H1 (cell line): ENCODE measurements at regions of chr14 and their contacts with region 1.

Region 1: GRCh38 chr14:23095196-23096108 is at the start of gene C14orf119:
- DNase-seq: peak in 1 of 2 experiments; percentile 96
- H3K4me3 ChIP-seq: peak within 1 kb of the TSS; percentile 92 to 97 (median 96)
- H3K27ac ChIP-seq: peak within 1 kb of the TSS; percentile 99
- H3K4me1 ChIP-seq: no peaks in the 10 kb centered on the region; a peak in 3 of 7 replicates
- H3K27me3 ChIP-seq: no peaks in the 10 kb centered on the region
- CTCF ChIP-seq: no peak
- EP300 ChIP-seq: no peak
- POLR2A ChIP-seq: no peak; a peak in 1 of 3 replicates
- RAD21 ChIP-seq: no peak
- total RNA-seq, gene C14orf119: 78.1 and 91.2 TPM in 2 replicates

Region 2: GRCh38 chr14:23113431-23114119 is 18.1 kb after region 1 on chr14:
- CTCF ChIA-PET with region 1: interaction called, 8 read pairs
- POLR2A ChIA-PET with region 1: interaction called, 13 read pairs
- DNase-seq: no peak
- H3K4me3 ChIP-seq: 0 out of 8 replicates have a peak overlapping the region, but pooled peaks of 1 of the 4 experiments have one; percentile 17
- H3K27ac ChIP-seq: no peak overlapping the region
- H3K4me1 ChIP-seq: peaks cover 0 to 14% (median 4%) of the 10 kb centered on the region in 4 experiments; a peak in 6 of 7 replicates
- H3K27me3 ChIP-seq: peaks cover 0 to 3% (median 0%) of the 10 kb centered on the region in 4 experiments; a peak in 2 of 7 replicates
- CTCF ChIP-seq: no peak
- EP300 ChIP-seq: no peak
- POLR2A ChIP-seq: no peak
- RAD21 ChIP-seq: no peak

Region 3: GRCh38 chr14:23344442-23344841 is 249.0 kb after region 1 on chr14:
- CTCF ChIA-PET with region 1: no interaction called
- POLR2A ChIA-PET with region 1: no interaction called
- DNase-seq: no peak
- H3K4me3 ChIP-seq: no peak overlapping the region
- H3K27ac ChIP-seq: no peak overlapping the region
- H3K4me1 ChIP-seq: peaks cover 0 to 4% (median 1%) of the 10 kb centered on the region in 4 experiments; a peak in 3 of 7 replicates
- H3K27me3 ChIP-seq: no peaks in the 10 kb centered on the region
- CTCF ChIP-seq: no peak
- EP300 ChIP-seq: no peak
- POLR2A ChIP-seq: no peak
- RAD21 ChIP-seq: no peak